ENCODE measurements at regions of chr4 and their contacts with region 1.

Region 1: DNA sequence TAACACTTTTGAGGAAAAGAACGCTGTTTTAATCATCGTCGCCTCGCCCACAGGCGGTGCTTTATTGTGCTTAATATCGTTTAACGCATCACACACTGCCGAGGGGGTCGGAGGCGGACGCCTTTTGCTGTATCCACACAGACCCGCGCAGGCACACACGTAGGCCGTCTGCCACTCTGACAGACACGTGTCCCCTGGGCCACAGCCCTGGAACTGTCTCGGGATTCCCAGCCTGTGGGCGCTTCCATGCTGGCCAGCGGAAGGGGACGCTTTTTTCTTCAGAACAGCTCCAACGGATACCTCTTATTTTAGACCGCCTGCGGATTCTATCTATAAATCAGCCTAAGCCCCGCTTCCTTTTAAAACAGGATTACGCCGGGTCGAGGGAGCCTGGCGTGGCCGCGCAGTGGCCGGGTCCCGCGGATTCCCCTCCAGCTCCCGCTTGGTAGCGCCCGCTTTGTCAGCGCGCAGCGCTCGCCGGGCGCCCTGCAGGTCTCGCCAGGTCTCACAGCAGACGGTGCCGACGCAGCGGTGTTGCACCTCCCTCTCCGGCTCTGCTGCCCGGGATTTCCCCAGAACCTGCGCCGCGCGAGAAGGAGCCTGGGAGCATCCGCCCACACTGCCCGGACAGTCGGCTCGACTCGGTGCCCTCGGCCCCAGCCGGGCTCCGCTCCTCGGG is at the start of gene NOCT:
- DNase-seq: peak; percentile 47 to 91
- H3K4me3 ChIP-seq: peak within 1 kb of the TSS; percentile 90 to 98 (median 92)
- H3K27ac ChIP-seq: peak within 1 kb of the TSS; percentile 89
- H3K4me1 ChIP-seq: peaks cover 17 to 22% (median 21%) of the 10 kb centered on the region in 4 experiments
- H3K27me3 ChIP-seq: no peaks in the 10 kb centered on the region
- CTCF ChIP-seq: no peak
- EP300 ChIP-seq: peak in 1 of 2 experiments; percentile 100; a peak in 2 of 3 replicates
- POLR2A ChIP-seq: peak; percentile 75 to 98
- RAD21 ChIP-seq: no peak
- total RNA-seq, gene NOCT: 44.3 and 45.5 TPM in 2 replicates

Region 2: DNA sequence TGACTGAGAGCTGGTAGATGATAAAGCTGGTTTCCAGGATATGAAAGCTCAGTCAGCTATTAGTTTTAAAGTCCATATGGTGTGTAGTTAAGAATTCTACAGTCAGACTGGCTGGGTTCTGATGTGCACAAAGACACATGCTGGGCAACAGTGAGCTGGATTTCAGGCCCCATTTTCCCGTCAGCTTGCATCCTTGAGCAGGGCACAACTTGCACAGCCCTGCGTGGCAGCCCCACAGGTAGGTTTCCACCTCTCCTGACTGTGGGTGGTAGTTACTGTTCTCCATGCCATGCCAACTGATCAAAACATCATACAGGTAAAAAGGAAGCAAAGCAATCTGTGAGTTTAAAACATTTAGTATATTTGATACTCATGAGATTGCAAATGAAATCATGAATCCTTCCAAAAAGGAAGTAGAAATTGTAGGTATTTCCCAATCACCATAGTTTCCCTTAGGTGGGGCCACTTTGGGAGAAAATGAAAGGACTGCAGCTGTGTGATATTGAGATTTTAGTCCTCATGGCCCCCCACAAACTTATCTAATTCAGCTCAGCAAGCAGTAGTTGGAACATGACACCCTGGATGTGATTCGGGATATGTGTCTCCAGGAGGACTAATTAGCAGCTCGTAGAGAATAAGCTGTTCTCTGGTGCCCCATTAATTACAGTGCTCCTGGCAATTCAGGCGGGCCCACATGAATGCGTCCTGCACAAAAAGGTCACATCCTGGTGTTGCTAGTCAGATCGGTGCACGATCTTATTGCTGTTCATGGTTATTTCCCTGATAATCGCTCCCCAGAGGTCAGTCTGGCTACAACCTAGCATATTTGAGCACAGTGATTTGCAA is 42.2 kb before region 1 on chr4:
- CTCF ChIA-PET with region 1: interaction called, 5 read pairs
- POLR2A ChIA-PET with region 1: interaction called, 13 read pairs
- DNase-seq: peak in 1 of 2 experiments; percentile 47
- H3K4me3 ChIP-seq: peak overlapping the region in 1 of 4 experiments; percentile 29; a peak in 1 of 8 replicates
- H3K27ac ChIP-seq: peak overlapping the region; percentile 62
- H3K4me1 ChIP-seq: peaks cover 15 to 20% (median 17%) of the 10 kb centered on the region in 4 experiments
- H3K27me3 ChIP-seq: no peaks in the 10 kb centered on the region
- CTCF ChIP-seq: no peak
- EP300 ChIP-seq: no peak
- POLR2A ChIP-seq: 0 out of 3 replicates have a peak, but pooled peaks of 1 of the 2 experiments have one; percentile 32
- RAD21 ChIP-seq: no peak

Region 3: GRCh38 chr4:139167774-139168444 is 152.5 kb after region 1 on chr4:
- CTCF ChIA-PET with region 1: no interaction called
- POLR2A ChIA-PET with region 1: no interaction called
- DNase-seq: no peak
- H3K4me3 ChIP-seq: no peak overlapping the region
- H3K27ac ChIP-seq: no peak overlapping the region; the same call in 1 of the 2 replicates
- H3K4me1 ChIP-seq: peaks cover 1 to 11% (median 7%) of the 10 kb centered on the region in 4 experiments; a peak in 4 of 7 replicates
- H3K27me3 ChIP-seq: no peaks in the 10 kb centered on the region
- CTCF ChIP-seq: peak in 2 of 3 experiments; percentile 50 to 58; a peak in 2 of 4 replicates
- EP300 ChIP-seq: no peak
- POLR2A ChIP-seq: no peak
- RAD21 ChIP-seq: peak; percentile 71 to 78

Measured in H1 (cell line).